ENCODE measurements at regions of chr14 and their contacts with region 1.

Region 1: DNA sequence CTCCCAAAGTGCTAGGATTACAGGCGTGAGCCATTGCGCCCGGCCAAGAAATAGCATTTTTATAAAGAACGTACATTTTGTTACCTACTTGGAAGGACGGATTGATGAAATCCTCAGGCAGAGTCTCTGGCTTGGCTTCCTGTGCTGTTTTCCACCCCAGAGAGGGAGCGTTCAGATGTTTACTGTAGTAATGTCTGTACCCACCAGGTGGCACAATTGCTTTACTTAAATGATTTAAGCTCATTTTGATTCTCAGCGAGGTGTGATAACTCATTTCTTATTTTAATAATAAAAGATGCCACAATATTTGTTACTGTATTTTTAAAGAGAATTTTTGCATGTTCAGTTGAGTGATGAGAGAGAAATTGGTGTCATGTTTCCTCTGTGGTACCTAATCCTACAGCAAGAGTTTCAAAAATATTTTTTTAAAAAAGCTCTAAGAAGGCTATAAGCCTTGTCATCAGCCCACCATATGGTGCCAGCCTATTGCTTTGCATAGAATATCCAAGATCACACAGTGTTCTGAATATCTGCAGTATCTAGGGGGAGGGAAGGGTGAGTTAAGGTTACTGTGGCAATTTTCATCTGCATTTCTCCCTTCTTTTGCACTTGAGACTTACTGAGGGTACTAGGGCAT is 82.6 kb upstream of the TRAF3 start:
- DNase-seq: peak; percentile 8 to 78 (median 59)
- ATAC-seq: peak; percentile 84
- H3K4me3 ChIP-seq: no peak overlapping the region
- H3K4me3 Mint-ChIP-seq: no peak overlapping the region
- H3K27ac ChIP-seq: no peak overlapping the region
- H3K27ac Mint-ChIP-seq: no peak overlapping the region
- H3K4me1 ChIP-seq: peaks cover 8% of the 10 kb centered on the region
- H3K4me1 Mint-ChIP-seq: peaks cover 38% of the 10 kb centered on the region
- H3K27me3 ChIP-seq: no peaks in the 10 kb centered on the region
- H3K27me3 Mint-ChIP-seq: no peaks in the 10 kb centered on the region
- CTCF ChIP-seq: peak; percentile 86

Region 2: GRCh38 chr14:102524466-102525218 is 170.0 kb before region 1 on chr14:
- CTCF ChIA-PET with region 1: interaction called, 4 read pairs
- POLR2A ChIA-PET with region 1: no interaction called
- intact Hi-C with region 1: loop called in 1 of 2 experiments (anchors 5 kb)
- DNase-seq: peak; percentile 81 to 97 (median 90)
- ATAC-seq: peak; percentile 79
- H3K4me3 ChIP-seq: peak overlapping the region; percentile 69 to 84
- H3K4me3 Mint-ChIP-seq: peak overlapping the region; percentile 85
- H3K27ac ChIP-seq: peak overlapping the region; percentile 35 to 83
- H3K27ac Mint-ChIP-seq: peak overlapping the region; percentile 61
- H3K4me1 ChIP-seq: peaks cover 20% of the 10 kb centered on the region
- H3K4me1 Mint-ChIP-seq: peaks cover 26% of the 10 kb centered on the region
- H3K27me3 ChIP-seq: no peaks in the 10 kb centered on the region
- H3K27me3 Mint-ChIP-seq: no peaks in the 10 kb centered on the region
- CTCF ChIP-seq: peak; percentile 96

Region 3: DNA sequence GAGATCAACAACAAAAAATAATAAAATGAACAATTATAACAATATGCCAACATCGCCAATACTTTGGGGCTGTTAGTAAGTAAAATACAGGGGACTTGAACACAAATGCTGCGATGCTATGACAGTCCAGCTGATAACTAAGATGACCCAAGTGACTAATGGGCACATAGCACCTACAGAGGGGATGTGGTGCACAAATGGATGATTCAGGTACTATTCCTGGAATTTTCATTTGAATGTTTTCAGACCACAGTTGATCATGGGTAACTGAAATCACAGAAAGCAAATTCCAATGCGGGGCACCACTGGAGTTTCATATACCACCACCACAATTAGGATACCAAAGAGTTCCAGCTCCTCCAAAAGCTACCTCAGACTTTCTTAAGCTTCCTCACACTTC is 19.3 kb before region 1 on chr14:
- CTCF ChIA-PET with region 1: no interaction called
- POLR2A ChIA-PET with region 1: no interaction called
- intact Hi-C with region 1: no loop called
- DNase-seq: no peak
- ATAC-seq: no peak
- H3K4me3 ChIP-seq: no peak overlapping the region
- H3K4me3 Mint-ChIP-seq: no peak overlapping the region
- H3K27ac ChIP-seq: no peak overlapping the region
- H3K27ac Mint-ChIP-seq: no peak overlapping the region
- H3K4me1 ChIP-seq: no peaks in the 10 kb centered on the region
- H3K4me1 Mint-ChIP-seq: peaks cover 4% of the 10 kb centered on the region
- H3K27me3 ChIP-seq: no peaks in the 10 kb centered on the region
- H3K27me3 Mint-ChIP-seq: no peaks in the 10 kb centered on the region
- CTCF ChIP-seq: no peak

Region 4: GRCh38 chr14:102708494-102708893 is 13.8 kb after region 1 on chr14:
- CTCF ChIA-PET with region 1: interaction called, 13 read pairs
- POLR2A ChIA-PET with region 1: interaction called, 3 read pairs
- intact Hi-C with region 1: no loop called
- DNase-seq: no peak
- ATAC-seq: no peak
- H3K4me3 ChIP-seq: no peak overlapping the region
- H3K4me3 Mint-ChIP-seq: no peak overlapping the region
- H3K27ac ChIP-seq: no peak overlapping the region
- H3K27ac Mint-ChIP-seq: no peak overlapping the region
- H3K4me1 ChIP-seq: no peaks in the 10 kb centered on the region
- H3K4me1 Mint-ChIP-seq: no peaks in the 10 kb centered on the region
- H3K27me3 ChIP-seq: no peaks in the 10 kb centered on the region
- H3K27me3 Mint-ChIP-seq: no peaks in the 10 kb centered on the region
- CTCF ChIP-seq: no peak

Region 5: DNA sequence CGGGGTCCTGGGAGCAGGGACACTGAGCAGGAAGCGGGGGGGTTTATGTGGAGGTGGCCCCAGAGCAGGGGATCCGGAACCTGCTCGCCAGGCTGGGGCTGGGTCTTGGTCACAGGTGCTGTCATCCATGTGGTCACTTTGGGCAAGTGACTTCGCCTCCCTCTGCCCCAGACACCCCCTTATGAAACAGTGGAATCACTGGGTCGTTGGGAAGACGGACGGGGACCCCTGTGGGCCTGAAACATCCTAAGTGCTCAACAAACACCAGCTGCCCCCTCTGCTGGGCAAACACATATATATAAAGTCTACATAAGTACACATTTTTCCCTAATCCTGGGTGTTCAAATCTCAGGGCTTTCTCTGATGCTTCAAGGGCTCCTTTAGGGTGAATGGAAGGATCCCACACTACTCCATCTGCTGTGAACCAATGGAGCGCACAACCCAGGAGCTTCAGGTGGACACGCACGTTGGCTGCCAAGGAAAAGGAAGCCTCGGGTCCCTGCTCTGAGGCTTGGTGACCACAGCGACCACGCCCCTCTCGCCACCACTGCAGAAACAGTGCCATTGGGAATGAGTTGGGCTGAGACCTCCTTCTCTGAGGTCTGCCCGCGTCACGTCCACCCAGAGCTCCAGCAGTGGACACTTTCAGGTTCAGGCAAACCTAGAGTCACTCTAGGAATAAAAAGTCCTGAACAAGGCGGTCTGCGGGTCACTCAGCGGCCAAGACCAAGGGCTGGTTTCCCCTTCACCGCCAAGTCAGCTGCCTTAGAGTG is 308.1 kb after region 1 on chr14:
- CTCF ChIA-PET with region 1: interaction called, 10 read pairs
- POLR2A ChIA-PET with region 1: no interaction called
- intact Hi-C with region 1: loop called (anchors 2 to 10 kb)
- DNase-seq: peak in 1 of 9 experiments; percentile 19
- ATAC-seq: no peak
- H3K4me3 ChIP-seq: no peak overlapping the region
- H3K4me3 Mint-ChIP-seq: no peak overlapping the region
- H3K27ac ChIP-seq: no peak overlapping the region
- H3K27ac Mint-ChIP-seq: no peak overlapping the region
- H3K4me1 ChIP-seq: no peaks in the 10 kb centered on the region
- H3K4me1 Mint-ChIP-seq: no peaks in the 10 kb centered on the region
- H3K27me3 ChIP-seq: no peaks in the 10 kb centered on the region
- H3K27me3 Mint-ChIP-seq: no peaks in the 10 kb centered on the region
- CTCF ChIP-seq: no peak

Region 6: DNA sequence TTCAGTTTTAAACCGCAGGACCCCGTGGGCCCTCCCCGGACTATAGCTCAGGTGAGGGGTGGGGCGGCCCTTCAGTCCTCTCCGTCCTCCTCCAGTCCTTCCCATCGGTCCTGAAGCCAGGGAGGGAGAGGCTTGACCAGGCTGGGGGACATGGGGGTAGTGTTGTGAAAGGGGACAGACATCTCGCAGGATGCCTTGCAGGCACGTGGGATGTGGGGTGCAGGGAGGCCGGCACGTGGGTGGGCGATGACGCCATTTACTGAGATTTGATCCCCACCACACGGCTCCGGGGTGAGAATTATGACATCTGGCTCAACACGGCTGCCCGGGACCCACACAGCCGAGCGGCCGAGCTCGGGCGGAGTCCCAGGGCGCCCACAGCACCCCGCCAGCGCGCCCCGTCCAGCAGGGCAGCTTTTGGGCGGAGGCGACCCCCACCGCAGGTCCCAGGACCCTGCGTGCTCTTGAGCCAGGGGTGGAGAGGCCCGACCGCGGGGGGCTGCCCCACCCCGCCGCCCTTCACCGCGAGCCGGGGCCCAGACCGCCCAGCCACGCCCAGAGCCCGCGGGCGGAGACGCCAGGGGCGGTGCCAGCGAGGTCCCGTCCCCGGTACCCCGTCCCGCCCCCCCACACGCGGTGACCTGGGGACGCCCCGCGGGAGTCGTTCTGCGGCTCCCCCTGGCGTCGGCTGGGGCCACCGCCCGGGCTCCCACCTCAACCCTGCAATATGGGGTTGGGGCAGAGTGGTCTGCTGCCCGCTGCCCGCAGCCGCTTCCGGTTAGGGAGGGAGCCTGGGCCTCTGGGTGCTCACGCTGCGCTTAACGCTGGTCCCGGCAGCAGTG is 396.6 kb after region 1 on chr14:
- CTCF ChIA-PET with region 1: interaction called, 14 read pairs
- POLR2A ChIA-PET with region 1: no interaction called
- intact Hi-C with region 1: loop called (anchors 1 kb)
- DNase-seq: peak; percentile 58 to 87 (median 80)
- ATAC-seq: peak; percentile 94
- H3K4me3 ChIP-seq: peak overlapping the region; percentile 26 to 50
- H3K4me3 Mint-ChIP-seq: peak overlapping the region; percentile 63
- H3K27ac ChIP-seq: no peak overlapping the region
- H3K27ac Mint-ChIP-seq: no peak overlapping the region
- H3K4me1 ChIP-seq: peaks cover 11% of the 10 kb centered on the region
- H3K4me1 Mint-ChIP-seq: peaks cover 6% of the 10 kb centered on the region
- H3K27me3 ChIP-seq: no peaks in the 10 kb centered on the region
- H3K27me3 Mint-ChIP-seq: peaks cover 2% of the 10 kb centered on the region
- CTCF ChIP-seq: peak; percentile 68

Region 7: DNA sequence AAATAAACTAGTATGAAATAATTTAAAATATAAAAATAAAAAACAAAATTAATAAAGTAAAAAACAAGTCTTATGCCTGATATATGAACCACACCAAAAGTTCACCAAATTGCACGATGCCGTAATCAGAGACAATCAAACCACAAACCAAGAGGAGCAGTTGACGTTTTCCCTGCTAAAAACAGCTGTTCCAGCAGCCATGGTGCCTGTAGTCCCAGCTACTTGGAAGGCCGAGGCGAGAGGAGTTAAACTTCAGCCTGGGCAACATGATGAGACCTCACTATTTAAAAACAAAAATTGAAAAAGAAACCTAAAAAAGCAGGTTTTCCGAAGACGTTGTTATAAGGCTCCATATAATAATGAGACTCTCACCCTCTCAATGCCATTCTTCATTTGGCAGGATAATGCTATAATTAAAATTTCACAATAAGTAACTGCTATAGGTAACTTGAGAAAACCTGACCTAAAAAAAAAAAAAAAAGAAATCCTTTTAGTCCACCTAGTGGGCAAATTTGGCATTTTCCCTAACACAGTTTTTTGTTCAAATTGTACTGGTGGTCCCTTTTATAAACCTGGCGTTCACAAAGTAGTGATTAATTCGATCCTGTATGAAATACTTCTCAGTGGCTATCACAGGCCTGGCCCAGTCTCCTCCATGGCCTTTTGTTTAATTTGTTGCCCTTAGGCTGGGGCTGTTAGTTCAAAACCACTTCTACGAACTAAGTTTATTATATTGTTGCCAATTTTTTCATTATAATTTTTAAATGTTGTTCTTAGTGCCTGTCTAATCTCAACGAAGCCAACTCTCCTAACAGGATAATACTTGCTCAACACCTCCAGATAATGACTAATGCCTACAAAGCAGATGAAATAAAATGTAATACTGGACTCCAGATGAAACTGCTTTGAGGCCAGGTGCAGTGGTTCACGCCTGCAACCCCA is 490.7 kb after region 1 on chr14:
- CTCF ChIA-PET with region 1: interaction called, 3 read pairs
- POLR2A ChIA-PET with region 1: no interaction called
- intact Hi-C with region 1: loop called (anchors 5 kb)
- DNase-seq: peak in 2 of 9 experiments; percentile 32 to 49
- ATAC-seq: no peak
- H3K4me3 ChIP-seq: no peak overlapping the region
- H3K4me3 Mint-ChIP-seq: no peak overlapping the region
- H3K27ac ChIP-seq: no peak overlapping the region
- H3K27ac Mint-ChIP-seq: no peak overlapping the region
- H3K4me1 ChIP-seq: peaks cover 6% of the 10 kb centered on the region
- H3K4me1 Mint-ChIP-seq: peaks cover 11% of the 10 kb centered on the region
- H3K27me3 ChIP-seq: peaks cover 0 to 4% of the 10 kb centered on the region in 2 experiments
- H3K27me3 Mint-ChIP-seq: peaks cover 48% of the 10 kb centered on the region
- CTCF ChIP-seq: peak; percentile 72